Activated naive CD4-positive, alpha-beta T cell treated with anti-CD3 and anti-CD28 coated beads for 36 hours (primary cell): ENCODE measurements at regions of chrX and their contacts with region 1.

Region 1: DNA sequence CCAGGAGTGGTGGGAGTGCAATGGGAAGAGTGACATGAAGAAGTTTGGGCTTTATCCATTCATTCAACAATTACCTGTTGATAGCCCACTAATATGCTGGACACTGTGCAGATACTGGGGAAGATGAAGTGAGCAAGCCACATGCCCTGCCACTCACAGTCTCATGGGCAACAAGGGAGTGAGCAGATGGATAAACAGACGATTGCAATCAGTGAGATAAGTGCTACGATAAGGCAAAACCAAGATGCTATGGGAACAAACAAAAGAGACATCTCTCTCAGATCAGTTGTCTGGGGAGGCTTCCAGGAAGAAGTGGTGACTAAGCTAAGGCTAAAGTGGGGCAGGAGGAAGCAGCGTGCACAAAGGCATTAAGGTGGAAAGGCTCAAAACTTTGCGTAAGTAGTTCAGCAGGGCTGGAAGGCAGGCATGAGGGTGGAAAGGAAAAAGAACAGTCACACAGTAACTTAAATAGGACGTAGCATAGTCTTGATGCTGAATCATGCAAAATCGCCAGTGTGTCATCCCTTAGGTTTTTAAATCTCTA is 31.7 kb downstream of the GAB3 start:
- DNase-seq: peak; percentile 56
- H3K4me3 Mint-ChIP-seq: peak overlapping the region; percentile 41
- H3K27ac Mint-ChIP-seq: peak overlapping the region; percentile 70
- H3K4me1 Mint-ChIP-seq: peaks cover 24% of the 10 kb centered on the region
- H3K27me3 Mint-ChIP-seq: no peaks in the 10 kb centered on the region

Region 2: GRCh38 chrX:154695911-154696675 is 23.1 kb before region 1 on chrX:
- CTCF ChIA-PET with region 1: interaction called, 6 read pairs
- intact Hi-C with region 1: loop called (anchors 1 kb)
- DNase-seq: peak; percentile 39
- H3K4me3 Mint-ChIP-seq: no peak overlapping the region
- H3K27ac Mint-ChIP-seq: no peak overlapping the region
- H3K4me1 Mint-ChIP-seq: peaks cover 14% of the 10 kb centered on the region
- H3K27me3 Mint-ChIP-seq: no peaks in the 10 kb centered on the region

Region 3: DNA sequence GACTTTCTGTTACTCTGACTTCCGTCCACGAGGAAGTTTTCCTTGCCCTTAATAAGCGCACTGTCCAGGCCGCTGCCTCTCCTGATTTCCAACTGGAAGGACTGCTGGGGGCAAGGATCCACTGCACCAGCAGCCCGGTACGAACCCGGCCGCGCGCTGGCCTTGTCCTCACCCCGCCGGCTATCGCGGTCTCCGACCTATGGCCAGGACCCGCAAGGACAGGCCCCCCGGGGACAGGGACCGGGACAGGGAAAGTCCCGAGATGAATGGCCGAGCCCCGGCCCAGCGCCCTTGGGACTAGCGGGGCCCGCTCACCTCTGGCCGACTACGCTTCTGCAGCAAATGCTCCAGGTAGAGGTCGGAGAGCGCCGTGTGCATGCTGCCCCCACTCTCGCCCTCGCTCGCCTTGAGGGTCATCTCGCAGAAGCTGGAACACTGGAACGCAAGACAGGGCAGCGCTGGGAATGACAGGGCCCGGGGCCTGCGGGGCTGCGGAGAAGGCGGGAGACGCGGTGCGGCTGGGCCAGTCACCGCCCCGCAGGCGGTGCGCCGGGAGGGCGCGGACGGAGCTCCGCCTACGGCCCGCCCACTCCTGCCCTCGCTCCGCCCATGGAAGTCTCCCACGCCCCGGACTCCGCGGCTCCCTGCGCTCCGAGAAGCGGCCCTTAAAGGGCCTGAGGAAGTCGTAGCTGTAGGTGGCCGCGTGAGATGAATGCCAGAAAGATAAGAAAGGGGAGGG is 85.9 kb after region 1 on chrX and contains the start of gene MPP1:
- CTCF ChIA-PET with region 1: no interaction called
- intact Hi-C with region 1: loop called (anchors 1 kb)
- DNase-seq: peak; percentile 78
- H3K4me3 Mint-ChIP-seq: peak within 1 kb of the TSS; percentile 74
- H3K27ac Mint-ChIP-seq: no peak within 1 kb of the TSS
- H3K4me1 Mint-ChIP-seq: peaks cover 38% of the 10 kb centered on the region
- H3K27me3 Mint-ChIP-seq: no peaks in the 10 kb centered on the region
- total RNA-seq, gene MPP1: 23.9 to 24.3 TPM